Stomach (tissue), 19 donors: ENCODE measurements at regions of chr5 and their contacts with region 1.

Region 1: GRCh38 chr5:97297063-97297703 is 114.1 kb upstream of the RIOK2 start:
- DNase-seq: peak in 1 of 2 donors; percentile 40
- H3K4me3 ChIP-seq: no peak overlapping the region
- H3K27ac ChIP-seq: no peak overlapping the region
- H3K4me1 ChIP-seq: no peaks in the 10 kb centered on the region
- H3K27me3 ChIP-seq: no peaks in the 10 kb centered on the region
- CTCF ChIP-seq: peak in 3 of 7 experiments; percentile 19 to 31 (median 23)
- EP300 ChIP-seq: no peak
- POLR2A ChIP-seq: no peak

Region 2: GRCh38 chr5:98827161-98827560 is 1530.0 kb after region 1 on chr5:
- intact Hi-C with region 1: loop called (anchors 10 kb)
- DNase-seq: peak in 1 of 2 donors; percentile 75
- H3K4me3 ChIP-seq: no peak overlapping the region
- H3K27ac ChIP-seq: no peak overlapping the region
- H3K4me1 ChIP-seq: no peaks in the 10 kb centered on the region
- H3K27me3 ChIP-seq: no peaks in the 10 kb centered on the region
- CTCF ChIP-seq: peak in 5 of 7 experiments; percentile 19 to 59 (median 50)
- EP300 ChIP-seq: no peak
- POLR2A ChIP-seq: no peak